Posterior cingulate gyrus (tissue), 11 donors: ENCODE measurements at regions of chr1 and their contacts with region 1.

Region 1: DNA sequence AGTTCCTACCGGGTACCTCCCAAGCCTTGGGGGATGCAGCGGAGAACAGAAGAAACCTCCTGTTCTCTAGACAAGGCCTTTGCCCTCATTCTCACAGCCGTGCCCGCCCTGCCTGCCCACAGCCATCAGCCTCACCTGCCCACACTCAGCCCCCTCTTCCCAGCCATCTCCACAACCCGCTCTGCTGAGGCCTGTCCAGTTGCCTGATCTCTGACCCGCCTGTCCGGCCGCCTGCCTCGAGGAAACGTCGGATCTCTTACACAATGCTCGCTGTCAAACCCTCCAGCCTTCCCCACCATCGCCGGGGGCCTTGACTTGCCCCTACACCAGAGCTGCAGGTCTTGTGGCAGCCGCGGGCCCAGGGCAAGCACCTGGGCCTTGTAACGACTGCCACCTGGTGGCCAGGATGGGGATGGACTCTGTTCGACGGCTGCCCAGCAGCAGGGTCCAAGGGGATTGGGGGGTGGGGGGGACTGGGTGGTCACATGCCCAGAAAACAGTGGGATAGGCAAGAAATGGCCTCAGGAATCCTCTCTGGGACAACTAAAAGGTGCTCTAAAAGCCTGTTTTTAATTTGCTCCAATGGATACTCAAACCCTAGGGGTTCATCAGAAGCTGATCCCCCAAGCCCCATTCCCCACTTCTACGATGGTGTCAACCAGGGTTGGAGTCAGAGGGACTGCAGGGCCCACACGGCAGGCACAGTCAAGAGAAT is 31.0 kb downstream of the SLC45A1 start:
- DNase-seq: peak in 7 of 10 donors; percentile 47 to 93 (median 64)

Region 2: GRCh38 chr1:7983086-7983778 is 365.7 kb before region 1 on chr1:
- intact Hi-C with region 1: loop called (anchors 2 kb)
- DNase-seq: no peak

Region 3: GRCh38 chr1:8015036-8015808 is 333.7 kb before region 1 on chr1:
- intact Hi-C with region 1: loop called (anchors 10 kb)
- DNase-seq: peak in 1 of 10 donors; percentile 37

Region 4: DNA sequence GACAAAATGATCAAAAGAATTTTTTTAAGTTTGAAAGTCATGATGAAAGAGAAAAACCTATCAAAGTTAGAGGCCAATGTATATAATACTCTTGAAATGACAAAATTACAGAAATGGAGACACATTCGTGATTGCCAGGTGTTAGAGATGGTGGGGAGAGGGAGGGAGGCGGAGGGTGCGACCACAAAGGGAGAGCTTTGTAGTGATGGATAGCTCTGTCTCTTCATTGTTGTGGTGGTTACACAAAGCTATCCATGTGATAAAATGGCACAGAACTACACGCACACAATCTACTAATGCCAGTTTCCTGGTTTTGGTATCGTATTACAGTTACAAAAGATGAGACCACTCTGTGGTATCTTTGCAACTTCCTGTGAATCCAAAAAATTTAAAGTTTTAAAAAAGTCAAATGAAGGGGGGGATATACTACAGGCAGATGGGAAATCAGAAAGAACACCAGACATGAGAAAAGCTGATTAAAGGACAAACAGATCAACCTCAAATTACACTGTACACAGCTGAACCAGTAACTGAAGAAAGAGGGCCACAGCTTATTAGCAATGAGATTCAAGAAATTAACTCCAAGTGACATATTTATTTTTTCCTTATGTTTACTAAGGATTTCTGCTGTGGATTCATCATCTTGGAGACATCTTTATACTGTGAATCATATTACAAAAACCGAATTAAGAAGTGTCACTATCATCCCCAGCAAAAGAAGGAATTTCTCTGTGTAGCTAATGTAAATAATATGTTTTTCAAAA is 168.0 kb after region 1 on chr1:
- intact Hi-C with region 1: no loop called
- DNase-seq: peak in 1 of 10 donors; percentile 20